Kidney (tissue), 22 donors: ENCODE measurements at regions of chr9 and their contacts with region 1.

Region 1: DNA sequence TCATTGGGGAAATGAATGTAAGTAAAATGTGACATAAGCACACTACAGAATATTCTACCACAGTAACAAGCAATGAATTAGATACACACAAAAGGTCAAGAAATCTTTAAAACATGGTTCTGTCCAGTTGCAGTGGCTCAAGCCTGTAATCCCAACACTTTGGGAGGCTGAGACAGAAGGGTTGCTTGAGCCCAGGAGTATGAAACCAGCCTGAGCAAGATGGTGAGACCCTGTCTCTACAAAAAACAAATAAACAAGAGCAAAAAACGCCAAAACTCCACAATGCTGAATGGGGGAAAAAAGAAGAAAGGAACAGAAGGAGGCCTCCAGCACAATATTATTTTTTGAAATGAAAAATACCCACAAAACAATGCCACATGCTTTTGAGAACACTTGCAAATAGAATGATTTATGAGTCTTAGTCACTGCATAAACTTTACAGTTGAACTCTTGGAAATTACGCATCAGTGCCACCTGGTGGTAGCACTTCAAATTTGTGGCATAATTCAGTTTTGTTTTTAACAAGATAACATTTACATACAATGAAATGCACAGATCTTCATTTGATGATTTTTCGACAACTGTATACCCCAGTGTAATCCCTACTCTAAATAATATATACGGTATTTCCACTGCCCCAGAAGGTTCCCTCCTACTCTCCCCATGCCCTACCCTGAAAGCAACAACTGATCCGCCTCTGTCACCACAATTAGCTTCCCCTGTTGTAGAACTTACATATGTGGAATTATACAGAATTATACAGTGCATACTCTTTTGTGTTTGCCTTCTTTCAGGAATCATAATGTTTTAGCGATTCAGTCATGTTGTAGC is 14.4 kb upstream of the SPINK4 start:
- DNase-seq: peak in 4 of 5 donors; percentile 67 to 87 (median 80)
- H3K4me3 ChIP-seq: no peak overlapping the region
- H3K27ac ChIP-seq: no peak overlapping the region
- H3K4me1 ChIP-seq: peaks cover 0 to 9% (median 3%) of the 10 kb centered on the region in 3 donors
- H3K27me3 ChIP-seq: no peaks in the 10 kb centered on the region
- CTCF ChIP-seq: peak; percentile 84

Region 2: DNA sequence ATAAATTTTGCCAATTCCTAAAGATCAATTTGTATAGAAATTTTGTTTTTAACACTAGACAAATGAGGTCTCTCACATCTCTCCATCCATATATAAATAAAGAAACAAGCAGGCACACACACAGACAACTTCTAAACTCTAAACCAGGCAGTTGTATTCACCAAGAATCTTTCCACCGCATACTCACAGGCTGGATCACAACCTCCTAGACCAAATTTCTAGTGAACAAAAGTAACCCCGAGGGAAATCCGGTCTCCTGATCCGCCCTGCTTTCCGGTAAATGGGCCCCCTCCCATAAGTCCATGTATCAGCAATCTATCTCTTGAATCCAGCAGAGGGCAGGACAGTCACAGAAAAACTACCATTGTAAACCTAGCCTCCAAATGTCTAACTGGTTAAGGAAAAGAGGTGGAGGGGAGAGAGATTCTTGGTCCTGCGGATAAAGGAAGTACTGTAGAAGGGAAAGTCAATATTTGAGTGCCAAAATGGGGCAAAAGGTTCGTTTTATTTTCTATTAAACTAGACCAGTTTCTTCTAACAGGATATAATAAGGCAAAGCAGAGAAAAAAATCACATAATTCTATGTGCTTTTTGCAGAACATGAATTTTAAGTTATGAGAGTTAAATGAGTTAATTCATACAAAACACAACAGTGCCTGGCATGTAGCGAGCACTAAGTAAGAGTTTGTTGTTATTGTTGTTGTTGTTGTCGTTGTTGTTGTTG is 144.2 kb before region 1 on chr9:
- intact Hi-C with region 1: loop called (anchors 5 kb)
- DNase-seq: peak in 4 of 5 donors; percentile 61 to 96 (median 88)
- H3K4me3 ChIP-seq: peak overlapping the region in 2 of 3 donors; percentile 26 to 59
- H3K27ac ChIP-seq: no peak overlapping the region
- H3K4me1 ChIP-seq: peaks cover 0 to 7% (median 3%) of the 10 kb centered on the region in 3 donors
- H3K27me3 ChIP-seq: no peaks in the 10 kb centered on the region
- CTCF ChIP-seq: peak; percentile 79

Region 3: DNA sequence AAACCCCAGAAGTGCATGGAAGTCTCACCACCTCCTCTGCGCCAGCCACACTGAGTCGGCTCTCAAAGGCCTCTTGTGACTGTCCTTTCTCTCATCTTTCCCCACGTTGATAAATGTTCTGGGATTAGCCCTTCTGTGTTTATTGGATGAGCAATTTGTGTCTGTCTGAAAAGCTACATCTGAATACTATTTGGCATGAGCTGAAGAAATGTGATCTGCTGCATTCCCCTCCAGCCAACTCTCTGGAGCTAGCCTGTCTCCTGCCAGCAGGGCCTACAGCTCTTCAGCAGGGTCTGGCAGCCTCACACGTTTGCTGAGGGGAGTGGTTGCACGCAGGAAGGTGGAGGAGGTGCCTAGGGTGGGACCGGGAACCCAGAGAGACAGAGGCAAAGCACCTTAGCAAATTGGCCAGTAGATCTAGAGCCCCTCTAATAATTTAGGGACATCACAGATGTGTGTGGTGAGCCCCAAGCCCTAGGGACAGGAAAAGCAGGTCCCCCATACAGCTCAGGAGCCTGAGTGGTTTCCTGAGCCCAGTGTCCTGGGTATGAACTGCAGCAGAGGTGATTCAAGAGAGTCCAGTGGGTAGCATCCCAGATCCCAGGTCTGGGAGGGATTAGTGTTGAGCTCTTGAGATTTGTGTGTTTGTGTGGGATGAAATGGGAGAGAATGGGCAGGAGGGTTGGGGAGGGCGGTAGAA is 37.9 kb before region 1 on chr9:
- intact Hi-C with region 1: no loop called
- DNase-seq: peak in 3 of 5 donors; percentile 29 to 60 (median 45)
- H3K4me3 ChIP-seq: no peak overlapping the region
- H3K27ac ChIP-seq: no peak overlapping the region
- H3K4me1 ChIP-seq: peaks cover 0 to 4% (median 0%) of the 10 kb centered on the region in 3 donors
- H3K27me3 ChIP-seq: no peaks in the 10 kb centered on the region
- CTCF ChIP-seq: no peak

Region 4: DNA sequence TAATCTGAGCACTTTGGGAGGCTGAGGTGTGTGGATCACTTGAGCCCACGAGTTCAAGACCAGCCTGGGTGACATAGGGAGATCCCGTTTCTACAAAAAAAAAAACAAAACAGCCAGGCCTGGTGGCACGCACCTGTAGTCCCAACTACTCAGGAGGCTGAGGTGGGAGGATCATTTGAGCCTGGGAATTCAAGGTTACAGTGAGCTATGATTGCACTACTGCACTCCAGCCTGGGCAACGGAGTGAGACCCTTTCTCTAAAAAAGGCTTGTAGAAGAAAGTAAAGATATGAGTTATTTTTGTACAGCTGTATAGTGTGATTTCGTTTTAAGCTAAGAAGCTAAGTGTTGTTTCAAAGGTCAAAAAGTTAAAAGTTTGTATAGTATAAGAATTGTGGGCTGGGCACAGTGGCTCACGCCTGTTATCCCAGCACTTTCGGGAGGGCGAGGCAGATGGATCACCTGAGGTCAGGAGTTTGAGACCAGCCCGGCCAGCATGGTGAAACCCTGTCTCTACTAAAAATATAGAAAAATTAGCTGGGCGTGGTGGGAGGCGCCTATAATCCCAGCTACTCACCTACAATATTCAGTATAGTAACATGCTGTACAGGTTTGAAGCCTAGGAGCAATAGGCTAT is 610.2 kb after region 1 on chr9:
- intact Hi-C with region 1: no loop called
- DNase-seq: no peak
- H3K4me3 ChIP-seq: no peak overlapping the region
- H3K27ac ChIP-seq: no peak overlapping the region
- H3K4me1 ChIP-seq: peaks cover 0 to 4% (median 0%) of the 10 kb centered on the region in 3 donors
- H3K27me3 ChIP-seq: no peaks in the 10 kb centered on the region
- CTCF ChIP-seq: no peak